SK-N-SH (cell line): ENCODE measurements at regions of chr10 and their contacts with region 1.

Region 1: GRCh38 chr10:26725837-26726727 is 28.6 kb downstream of the PDSS1 start:
- DNase-seq: peak; percentile 63
- H3K4me3 ChIP-seq: no peak overlapping the region; a peak in 1 of 4 replicates
- H3K27ac ChIP-seq: no peak overlapping the region
- H3K4me1 ChIP-seq: no peaks in the 10 kb centered on the region
- H3K27me3 ChIP-seq: no peaks in the 10 kb centered on the region
- CTCF ChIP-seq: peak; percentile 89
- EP300 ChIP-seq: no peak
- RAD21 ChIP-seq: peak; percentile 82

Region 2: GRCh38 chr10:26737730-26738129 is 11.6 kb after region 1 on chr10:
- CTCF ChIA-PET with region 1: interaction called, 18 read pairs
- POLR2A ChIA-PET with region 1: no interaction called
- DNase-seq: no peak
- H3K4me3 ChIP-seq: no peak overlapping the region
- H3K27ac ChIP-seq: no peak overlapping the region
- H3K4me1 ChIP-seq: no peaks in the 10 kb centered on the region
- H3K27me3 ChIP-seq: no peaks in the 10 kb centered on the region
- CTCF ChIP-seq: no peak
- EP300 ChIP-seq: no peak
- RAD21 ChIP-seq: no peak

Region 3: DNA sequence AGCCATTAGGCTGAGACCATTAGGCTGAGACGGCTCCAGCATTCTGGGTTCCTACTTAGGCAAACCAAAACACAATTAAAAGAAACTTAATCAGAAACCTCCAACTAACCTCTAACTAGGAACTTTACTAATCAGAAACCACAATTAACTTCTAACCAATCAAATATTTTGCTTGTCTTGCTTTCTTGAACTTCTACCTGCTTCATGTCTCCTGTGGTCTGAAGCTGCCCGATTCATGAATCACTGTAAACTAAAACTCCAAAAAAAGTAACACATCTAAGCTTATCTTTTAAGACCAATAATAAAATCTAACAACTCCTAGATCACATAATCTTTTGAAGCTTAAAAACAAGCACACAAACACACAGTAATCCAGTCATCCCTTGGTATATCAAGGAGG is 47.6 kb after region 1 on chr10:
- CTCF ChIA-PET with region 1: interaction called, 12 read pairs
- POLR2A ChIA-PET with region 1: no interaction called
- DNase-seq: no peak
- H3K4me3 ChIP-seq: no peak overlapping the region
- H3K27ac ChIP-seq: no peak overlapping the region
- H3K4me1 ChIP-seq: no peaks in the 10 kb centered on the region
- H3K27me3 ChIP-seq: no peaks in the 10 kb centered on the region
- CTCF ChIP-seq: no peak
- EP300 ChIP-seq: no peak
- RAD21 ChIP-seq: no peak

Region 4: GRCh38 chr10:26860443-26861204 is 134.5 kb after region 1 on chr10 and contains the start of gene ABI1:
- CTCF ChIA-PET with region 1: interaction called, 17 read pairs
- POLR2A ChIA-PET with region 1: interaction called, 3 read pairs
- DNase-seq: peak; percentile 92
- H3K4me3 ChIP-seq: peak within 1 kb of the TSS; percentile 66 to 75
- H3K27ac ChIP-seq: peak within 1 kb of the TSS; percentile 92 to 95
- H3K4me1 ChIP-seq: peaks cover 5 to 11% of the 10 kb centered on the region in 2 experiments; a peak in 3 of 4 replicates
- H3K27me3 ChIP-seq: no peaks in the 10 kb centered on the region; the same call in 1 of the 2 replicates
- CTCF ChIP-seq: no peak
- EP300 ChIP-seq: peak in 1 of 2 experiments; percentile 47; a peak in 1 of 4 replicates
- RAD21 ChIP-seq: no peak
- polyA plus RNA-seq, gene ABI1: 36.7 and 47.5 TPM in 2 replicates

Region 5: DNA sequence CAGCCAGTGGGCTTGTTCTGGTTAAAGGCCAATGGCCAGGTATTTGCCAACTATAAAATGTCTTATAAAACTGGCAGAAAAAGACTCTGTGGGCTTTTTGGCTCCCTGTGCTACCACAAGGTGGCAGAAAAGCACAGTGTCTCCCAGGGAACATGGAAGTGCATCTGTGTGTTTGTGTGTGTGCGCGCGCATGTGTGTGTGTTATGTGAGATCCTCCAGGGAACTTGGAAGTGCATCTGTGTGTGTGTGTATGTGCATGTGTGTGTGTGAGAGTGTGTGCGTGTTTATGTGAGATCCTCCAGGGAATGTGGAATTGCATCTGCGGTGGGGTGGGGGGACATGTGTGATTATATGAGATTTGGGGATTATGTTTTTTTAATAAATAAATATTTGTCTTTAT is 164.9 kb after region 1 on chr10:
- CTCF ChIA-PET with region 1: interaction called, 14 read pairs
- POLR2A ChIA-PET with region 1: no interaction called
- DNase-seq: peak; percentile 52
- H3K4me3 ChIP-seq: no peak overlapping the region; a peak in 1 of 4 replicates
- H3K27ac ChIP-seq: no peak overlapping the region
- H3K4me1 ChIP-seq: no peaks in the 10 kb centered on the region
- H3K27me3 ChIP-seq: no peaks in the 10 kb centered on the region
- CTCF ChIP-seq: peak; percentile 63
- EP300 ChIP-seq: no peak
- RAD21 ChIP-seq: peak; percentile 82